A549 (cell line): ENCODE measurements at regions of chr11 and their contacts with region 1.

Region 1: GRCh38 chr11:72642884-72643511 is 31.2 kb downstream of the PDE2A start:
- DNase-seq: peak; percentile 65 to 80
- ATAC-seq: peak; percentile 59 to 86
- H3K4me3 ChIP-seq: peak overlapping the region; percentile 68
- H3K27ac ChIP-seq: peak overlapping the region; percentile 58 to 91
- H3K4me1 ChIP-seq: peaks cover 16% of the 10 kb centered on the region
- CTCF ChIP-seq: peak; percentile 96
- EP300 ChIP-seq: no peak
- POLR2A ChIP-seq: no peak
- RAD21 ChIP-seq: peak; percentile 64 to 88

Region 2: DNA sequence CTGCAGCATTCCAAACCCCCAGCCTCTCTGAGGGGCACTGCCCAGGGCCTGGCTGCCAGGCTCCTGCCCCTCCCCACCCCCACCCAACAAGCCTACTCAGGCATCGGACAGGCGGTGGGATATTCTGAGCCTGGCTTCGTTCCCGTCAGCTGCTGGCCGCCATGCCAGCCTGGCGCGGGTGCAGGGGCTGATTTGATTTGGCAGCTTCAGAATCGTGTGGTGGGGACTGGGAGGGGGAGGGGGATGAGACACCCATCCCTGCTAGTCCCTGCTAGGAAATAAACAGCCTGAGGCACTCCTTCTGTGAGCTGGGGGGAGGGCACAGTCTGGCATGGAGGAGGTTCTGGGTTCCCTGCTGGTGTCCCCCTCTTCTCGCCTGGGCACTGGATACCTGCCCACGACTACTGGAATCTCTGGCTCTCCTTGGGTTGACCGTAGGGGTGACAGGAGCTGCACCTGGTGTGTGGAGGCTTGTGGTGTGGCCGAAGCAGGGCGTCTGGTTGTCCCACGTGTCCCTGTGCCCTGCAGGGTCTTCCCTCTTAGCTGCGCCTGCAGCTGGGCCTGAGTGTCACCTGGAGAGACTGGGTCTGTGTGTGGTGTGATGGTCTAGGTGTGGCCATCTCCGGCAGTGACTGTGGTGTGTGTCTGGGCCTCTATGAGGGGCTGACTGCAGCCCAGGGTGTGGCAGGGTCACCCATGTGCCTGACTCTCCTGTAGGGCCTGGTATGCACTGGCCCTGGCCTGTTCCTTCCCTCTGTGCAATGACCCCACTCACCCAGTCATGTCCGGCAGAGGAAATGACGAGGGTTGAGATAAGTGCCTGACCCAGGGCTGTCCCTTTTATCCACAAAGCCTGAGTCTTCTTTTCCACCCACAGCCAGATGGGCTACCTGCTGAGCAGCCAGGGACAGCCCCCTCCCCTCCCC is 10.9 kb before region 1 on chr11:
- CTCF ChIA-PET with region 1: interaction called, 23 read pairs
- POLR2A ChIA-PET with region 1: no interaction called
- DNase-seq: no peak
- ATAC-seq: no peak
- H3K4me3 ChIP-seq: no peak overlapping the region
- H3K27ac ChIP-seq: no peak overlapping the region
- H3K4me1 ChIP-seq: peaks cover under 1% of the 10 kb centered on the region; the same call in 1 of the 3 replicates
- CTCF ChIP-seq: no peak
- EP300 ChIP-seq: no peak
- POLR2A ChIP-seq: no peak
- RAD21 ChIP-seq: no peak